SK-N-SH (cell line): ENCODE measurements at regions of chr17 and their contacts with region 1.

Region 1: DNA sequence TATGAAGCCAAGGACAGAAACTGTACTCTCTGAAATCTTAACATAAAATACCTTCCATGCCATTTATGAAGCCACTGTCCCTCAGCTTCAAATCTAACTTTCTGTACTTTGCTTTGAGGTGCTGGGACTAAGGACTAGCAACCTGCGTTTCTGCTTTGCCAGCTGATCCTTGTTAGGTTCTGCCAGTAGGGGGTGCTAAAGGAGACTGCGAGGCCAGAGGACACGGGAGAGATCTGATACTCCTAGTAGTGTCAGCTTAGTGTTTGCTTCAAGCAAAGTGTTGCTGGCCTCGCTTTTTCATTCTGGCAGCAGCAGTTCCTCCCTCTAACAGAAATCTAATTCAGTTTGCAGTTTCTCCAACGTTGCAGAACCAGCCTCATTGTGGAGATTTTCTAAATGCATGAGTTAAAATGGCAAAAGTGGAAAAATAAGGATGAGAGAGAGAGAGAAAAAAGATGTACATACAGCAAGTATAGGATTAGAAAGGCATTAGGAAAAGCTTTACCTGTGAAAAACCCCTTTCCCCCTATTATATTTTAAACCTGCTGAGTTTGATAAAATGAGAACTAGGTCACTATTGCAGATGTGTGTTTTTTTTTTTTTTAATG is 297.5 kb downstream of the CA10 start:
- DNase-seq: peak; percentile 50
- H3K4me3 ChIP-seq: no peak overlapping the region; a peak in 1 of 4 replicates
- H3K27ac ChIP-seq: no peak overlapping the region
- H3K4me1 ChIP-seq: peaks cover 0 to 11% of the 10 kb centered on the region in 2 experiments; a peak in 2 of 4 replicates
- H3K27me3 ChIP-seq: no peaks in the 10 kb centered on the region
- CTCF ChIP-seq: peak; percentile 74
- EP300 ChIP-seq: no peak
- RAD21 ChIP-seq: peak; percentile 82

Region 2: DNA sequence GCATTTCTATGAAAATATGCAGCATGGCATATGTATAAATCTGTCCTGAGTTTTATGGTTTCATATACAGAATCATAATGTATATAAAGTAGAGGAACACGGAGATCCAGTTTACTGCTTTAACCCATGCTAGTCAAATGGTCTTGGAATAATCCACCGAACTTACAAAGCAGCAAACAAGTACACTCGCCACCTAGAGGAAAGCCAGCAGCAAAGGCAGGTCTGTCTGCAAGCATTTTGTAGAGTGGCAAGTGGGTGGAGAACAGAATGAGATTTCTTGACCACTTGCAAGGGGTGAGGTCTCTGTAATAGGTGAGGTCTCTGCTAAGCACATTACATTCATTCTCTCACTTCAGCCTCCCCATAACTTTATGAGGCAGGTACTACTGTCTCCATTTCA is 10.9 kb before region 1 on chr17:
- CTCF ChIA-PET with region 1: interaction called, 28 read pairs
- POLR2A ChIA-PET with region 1: no interaction called
- DNase-seq: no peak
- H3K4me3 ChIP-seq: no peak overlapping the region
- H3K27ac ChIP-seq: no peak overlapping the region
- H3K4me1 ChIP-seq: peaks cover 0 to 5% of the 10 kb centered on the region in 2 experiments; a peak in 2 of 4 replicates
- H3K27me3 ChIP-seq: no peaks in the 10 kb centered on the region
- CTCF ChIP-seq: peak; percentile 8; the same call in 1 of the 2 replicates
- EP300 ChIP-seq: no peak
- RAD21 ChIP-seq: no peak

Region 3: GRCh38 chr17:51876986-51877385 is 15.9 kb after region 1 on chr17:
- CTCF ChIA-PET with region 1: interaction called, 17 read pairs
- POLR2A ChIA-PET with region 1: no interaction called
- DNase-seq: no peak
- H3K4me3 ChIP-seq: no peak overlapping the region
- H3K27ac ChIP-seq: no peak overlapping the region
- H3K4me1 ChIP-seq: no peaks in the 10 kb centered on the region
- H3K27me3 ChIP-seq: no peaks in the 10 kb centered on the region
- CTCF ChIP-seq: no peak
- EP300 ChIP-seq: no peak
- RAD21 ChIP-seq: no peak

Region 4: DNA sequence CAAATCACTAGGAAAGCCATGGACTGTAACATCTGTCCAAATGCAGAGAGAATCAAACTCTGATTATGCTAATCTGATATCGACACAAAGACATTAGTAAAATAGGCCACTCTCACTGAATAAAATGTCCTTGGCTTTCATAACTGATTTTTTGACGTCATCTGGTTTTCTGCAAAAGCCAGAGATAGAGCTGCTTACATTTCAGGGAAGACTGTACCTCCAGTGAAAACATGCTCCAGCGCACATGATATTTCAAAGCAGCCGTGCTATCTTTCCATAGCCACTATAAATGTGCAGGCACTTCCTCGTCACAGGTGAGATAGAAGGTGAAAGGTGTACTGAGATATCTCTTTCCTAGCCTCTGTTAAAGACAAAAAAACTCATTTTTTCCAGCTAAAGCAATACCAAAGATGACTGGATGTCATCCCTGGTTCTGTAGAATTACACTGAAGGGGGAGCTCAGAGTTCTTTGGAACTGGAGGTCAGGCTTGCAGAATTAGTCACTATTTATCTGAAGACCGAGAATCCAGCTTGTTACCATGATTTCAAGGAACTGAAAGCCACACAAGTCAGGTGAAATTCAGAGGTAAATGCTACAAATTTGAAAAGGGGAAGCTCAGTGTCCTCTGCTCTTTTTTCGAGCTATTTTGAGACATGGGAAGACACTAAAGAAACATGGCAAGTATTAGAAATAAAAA is 47.9 kb after region 1 on chr17:
- CTCF ChIA-PET with region 1: interaction called, 10 read pairs
- POLR2A ChIA-PET with region 1: no interaction called
- DNase-seq: peak; percentile 12
- H3K4me3 ChIP-seq: no peak overlapping the region
- H3K27ac ChIP-seq: no peak overlapping the region; a peak in 1 of 4 replicates
- H3K4me1 ChIP-seq: peaks cover 0 to 5% of the 10 kb centered on the region in 2 experiments; a peak in 2 of 4 replicates
- H3K27me3 ChIP-seq: no peaks in the 10 kb centered on the region
- CTCF ChIP-seq: no peak
- EP300 ChIP-seq: no peak
- RAD21 ChIP-seq: peak; percentile 6; the same call in 1 of the 2 replicates

Region 5: DNA sequence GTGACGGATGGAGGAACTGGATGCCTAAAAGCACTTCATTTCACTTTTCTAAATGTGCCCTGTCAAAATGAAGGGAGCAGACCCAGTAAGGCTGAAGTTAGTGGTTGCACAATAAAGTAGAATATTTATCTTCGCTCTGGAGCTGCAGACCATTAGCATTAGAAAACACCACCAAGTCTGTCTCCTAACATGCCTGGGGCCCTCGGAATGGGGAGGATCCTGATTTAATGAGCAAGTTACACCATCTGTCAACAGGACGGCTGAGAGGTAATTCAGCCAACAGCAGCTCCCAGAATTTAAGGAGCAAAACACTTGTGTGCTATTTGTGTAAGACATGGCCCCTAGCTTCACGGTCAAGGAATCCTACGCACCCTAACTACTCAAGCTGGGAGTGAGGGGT is 275.1 kb after region 1 on chr17:
- CTCF ChIA-PET with region 1: interaction called, 12 read pairs
- POLR2A ChIA-PET with region 1: no interaction called
- DNase-seq: no peak
- H3K4me3 ChIP-seq: no peak overlapping the region
- H3K27ac ChIP-seq: no peak overlapping the region
- H3K4me1 ChIP-seq: no peaks in the 10 kb centered on the region
- H3K27me3 ChIP-seq: no peaks in the 10 kb centered on the region
- CTCF ChIP-seq: no peak
- EP300 ChIP-seq: no peak
- RAD21 ChIP-seq: no peak